Transverse colon (tissue), 4 donors: ENCODE measurements at regions of chr6 and their contacts with region 1.

Region 1: GRCh38 chr6:31546962-31547726 is at the start of gene NFKBIL1:
- DNase-seq: peak; percentile 96
- H3K4me3 ChIP-seq: peak within 1 kb of the TSS; percentile 12 to 58 (median 39)
- H3K27ac ChIP-seq: peak within 1 kb of the TSS; percentile 86 to 92 (median 89)
- H3K4me1 ChIP-seq: peaks cover 16 to 30% (median 21%) of the 10 kb centered on the region in 4 donors
- H3K27me3 ChIP-seq: no peaks in the 10 kb centered on the region
- CTCF ChIP-seq: peak in 1 of 5 experiments; percentile 35
- EP300 ChIP-seq: no peak
- POLR2A ChIP-seq: peak; percentile 54
- total RNA-seq, gene NFKBIL1: 13.7 to 29.5 (median 22.9) TPM

Region 2: GRCh38 chr6:31403283-31403989 is 143.7 kb before region 1 on chr6 and contains the start of gene MICA:
- in situ Hi-C with region 1: no loop called
- intact Hi-C with region 1: no loop called
- DNase-seq: peak; percentile 94
- H3K4me3 ChIP-seq: peak within 1 kb of the TSS; percentile 19 to 92 (median 72)
- H3K27ac ChIP-seq: peak within 1 kb of the TSS; percentile 98 to 100 (median 99)
- H3K4me1 ChIP-seq: peaks cover 29 to 65% (median 50%) of the 10 kb centered on the region in 4 donors
- H3K27me3 ChIP-seq: no peaks in the 10 kb centered on the region
- CTCF ChIP-seq: peak in 2 of 5 experiments; percentile 22 to 42
- EP300 ChIP-seq: no peak
- POLR2A ChIP-seq: peak; percentile 77
- total RNA-seq, gene MICA: 7.8 to 45.3 (median 19.9) TPM

Region 3: GRCh38 chr6:31580807-31581433 is 33.8 kb after region 1 on chr6:
- in situ Hi-C with region 1: no loop called
- intact Hi-C with region 1: loop called (anchors 5 kb)
- DNase-seq: peak; percentile 88
- H3K4me3 ChIP-seq: peak overlapping the region; percentile 52 to 96 (median 75)
- H3K27ac ChIP-seq: peak overlapping the region; percentile 79 to 91 (median 86)
- H3K4me1 ChIP-seq: peaks cover 6 to 33% (median 7%) of the 10 kb centered on the region in 4 donors
- H3K27me3 ChIP-seq: peaks cover 7% of the 10 kb centered on the region
- CTCF ChIP-seq: peak; percentile 92 to 99 (median 97)
- EP300 ChIP-seq: no peak
- POLR2A ChIP-seq: peak; percentile 48

Region 4: GRCh38 chr6:31597006-31597405 is 49.9 kb after region 1 on chr6:
- in situ Hi-C with region 1: loop called in 3 of 4 experiments (anchors 5 to 10 kb)
- intact Hi-C with region 1: loop called (anchors 2 kb)
- DNase-seq: no peak
- H3K4me3 ChIP-seq: no peak overlapping the region
- H3K27ac ChIP-seq: no peak overlapping the region
- H3K4me1 ChIP-seq: no peaks in the 10 kb centered on the region
- H3K27me3 ChIP-seq: no peaks in the 10 kb centered on the region
- CTCF ChIP-seq: peak; percentile 8 to 45 (median 31)
- EP300 ChIP-seq: no peak
- POLR2A ChIP-seq: no peak